ENCODE measurements at regions of chr11 and their contacts with region 1.

Region 1: GRCh38 chr11:60831143-60831500 is 10.8 kb upstream of the CCDC86 start:
- DNase-seq: peak; percentile 34 to 90 (median 73)
- ATAC-seq: peak; percentile 84 to 88 (median 88)
- H3K4me3 ChIP-seq: peak overlapping the region in 1 of 2 donors; percentile 32
- H3K4me3 Mint-ChIP-seq: no peak overlapping the region
- H3K27ac ChIP-seq: no peak overlapping the region
- H3K27ac Mint-ChIP-seq: no peak overlapping the region
- H3K4me1 ChIP-seq: no peaks in the 10 kb centered on the region
- H3K4me1 Mint-ChIP-seq: no peaks in the 10 kb centered on the region
- H3K27me3 ChIP-seq: peaks cover 0 to 19% of the 10 kb centered on the region in 2 experiments
- H3K27me3 Mint-ChIP-seq: peaks cover 3 to 7% of the 10 kb centered on the region in 2 donors

Region 2: DNA sequence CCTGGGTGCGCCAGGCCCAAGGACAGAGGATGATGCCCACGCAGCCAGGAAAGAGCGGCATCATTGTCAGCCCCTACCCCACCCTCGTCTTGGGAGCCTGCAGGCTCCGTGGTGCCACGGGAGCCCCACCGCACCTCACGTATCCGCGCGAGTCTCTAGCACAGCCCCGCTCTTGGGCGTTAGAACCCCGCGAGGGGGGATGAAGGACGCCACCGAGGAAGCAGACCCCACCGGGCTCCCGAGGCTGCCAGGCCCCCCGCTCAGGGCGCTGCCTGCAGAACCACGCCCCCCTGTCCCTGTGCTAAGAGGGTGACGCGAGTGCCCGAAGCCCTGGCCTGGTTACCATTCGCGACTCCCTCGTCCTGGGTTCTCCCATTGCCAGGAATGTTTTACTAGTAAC is 184.0 kb before region 1 on chr11:
- CTCF ChIA-PET with region 1: no interaction called
- POLR2A ChIA-PET with region 1: no interaction called
- DNase-seq: no peak
- ATAC-seq: no peak
- H3K4me3 ChIP-seq: no peak overlapping the region
- H3K4me3 Mint-ChIP-seq: no peak overlapping the region
- H3K27ac ChIP-seq: no peak overlapping the region
- H3K27ac Mint-ChIP-seq: no peak overlapping the region
- H3K4me1 ChIP-seq: no peaks in the 10 kb centered on the region
- H3K4me1 Mint-ChIP-seq: no peaks in the 10 kb centered on the region
- H3K27me3 ChIP-seq: peaks cover 0 to 10% of the 10 kb centered on the region in 2 experiments
- H3K27me3 Mint-ChIP-seq: peaks cover 4 to 5% of the 10 kb centered on the region in 2 donors

Region 3: GRCh38 chr11:60887556-60887955 is 56.4 kb after region 1 on chr11:
- CTCF ChIA-PET with region 1: interaction called, 9 to 45 read pairs
- POLR2A ChIA-PET with region 1: no interaction called
- DNase-seq: peak in 14 of 35 experiments; percentile 17 to 54 (median 28)
- ATAC-seq: peak; percentile 81 to 87 (median 82)
- H3K4me3 ChIP-seq: no peak overlapping the region
- H3K4me3 Mint-ChIP-seq: no peak overlapping the region
- H3K27ac ChIP-seq: no peak overlapping the region
- H3K27ac Mint-ChIP-seq: no peak overlapping the region
- H3K4me1 ChIP-seq: no peaks in the 10 kb centered on the region
- H3K4me1 Mint-ChIP-seq: peaks cover 0 to 11% (median 11%) of the 10 kb centered on the region in 3 donors
- H3K27me3 ChIP-seq: no peaks in the 10 kb centered on the region
- H3K27me3 Mint-ChIP-seq: no peaks in the 10 kb centered on the region

Region 4: GRCh38 chr11:60899046-60899936 is 68.2 kb after region 1 on chr11:
- CTCF ChIA-PET with region 1: interaction called, 14 read pairs
- POLR2A ChIA-PET with region 1: no interaction called
- DNase-seq: peak in 6 of 35 experiments; percentile 8 to 73 (median 24)
- ATAC-seq: peak; percentile 71 to 74 (median 72)
- H3K4me3 ChIP-seq: no peak overlapping the region
- H3K4me3 Mint-ChIP-seq: no peak overlapping the region
- H3K27ac ChIP-seq: no peak overlapping the region
- H3K27ac Mint-ChIP-seq: no peak overlapping the region
- H3K4me1 ChIP-seq: peaks cover 0 to 6% of the 10 kb centered on the region in 2 experiments
- H3K4me1 Mint-ChIP-seq: peaks cover 18 to 20% (median 19%) of the 10 kb centered on the region in 3 donors
- H3K27me3 ChIP-seq: no peaks in the 10 kb centered on the region
- H3K27me3 Mint-ChIP-seq: no peaks in the 10 kb centered on the region

Region 5: GRCh38 chr11:61187505-61188130 is 356.5 kb after region 1 on chr11:
- CTCF ChIA-PET with region 1: interaction called, 13 to 17 read pairs
- POLR2A ChIA-PET with region 1: no interaction called
- DNase-seq: peak; percentile 38 to 91 (median 69)
- ATAC-seq: peak; percentile 78 to 87 (median 84)
- H3K4me3 ChIP-seq: no peak overlapping the region
- H3K4me3 Mint-ChIP-seq: no peak overlapping the region
- H3K27ac ChIP-seq: no peak overlapping the region
- H3K27ac Mint-ChIP-seq: no peak overlapping the region
- H3K4me1 ChIP-seq: no peaks in the 10 kb centered on the region
- H3K4me1 Mint-ChIP-seq: peaks cover 0 to 5% (median 3%) of the 10 kb centered on the region in 3 donors
- H3K27me3 ChIP-seq: peaks cover 0 to 17% of the 10 kb centered on the region in 2 experiments
- H3K27me3 Mint-ChIP-seq: peaks cover 0 to 3% of the 10 kb centered on the region in 2 donors

Measured in T-cell (primary cell).